ENCODE measurements at regions of chr11 and their contacts with region 1.

Region 1: GRCh38 chr11:67373925-67374618 is 674 bp upstream of the CLCF1 start:
- DNase-seq: peak; percentile 82
- H3K4me3 ChIP-seq: peak overlapping the region; percentile 28 to 86 (median 64)
- H3K27ac ChIP-seq: peak overlapping the region; percentile 33
- H3K4me1 ChIP-seq: peaks cover 37% of the 10 kb centered on the region
- H3K27me3 ChIP-seq: peaks cover 0 to 3% of the 10 kb centered on the region in 2 experiments
- CTCF ChIP-seq: peak; percentile 60 to 79
- POLR2A ChIP-seq: peak; percentile 58

Region 2: GRCh38 chr11:67167086-67167485 is 207.0 kb before region 1 on chr11:
- CTCF ChIA-PET with region 1: no interaction called
- POLR2A ChIA-PET with region 1: interaction called, 12 read pairs
- dilution Hi-C with region 1: no loop called
- intact Hi-C with region 1: no loop called
- DNase-seq: peak; percentile 8
- H3K4me3 ChIP-seq: no peak overlapping the region
- H3K27ac ChIP-seq: no peak overlapping the region
- H3K4me1 ChIP-seq: peaks cover 12% of the 10 kb centered on the region
- H3K27me3 ChIP-seq: no peaks in the 10 kb centered on the region
- CTCF ChIP-seq: no peak
- POLR2A ChIP-seq: no peak

Region 3: GRCh38 chr11:67288452-67289225 is 85.4 kb before region 1 on chr11:
- CTCF ChIA-PET with region 1: no interaction called
- POLR2A ChIA-PET with region 1: no interaction called
- dilution Hi-C with region 1: no loop called
- intact Hi-C with region 1: loop called (anchors 1 kb)
- DNase-seq: peak; percentile 86
- H3K4me3 ChIP-seq: peak overlapping the region; percentile 52 to 65 (median 54)
- H3K27ac ChIP-seq: peak overlapping the region; percentile 61
- H3K4me1 ChIP-seq: peaks cover 22% of the 10 kb centered on the region
- H3K27me3 ChIP-seq: no peaks in the 10 kb centered on the region
- CTCF ChIP-seq: peak; percentile 44 to 53
- POLR2A ChIP-seq: no peak

Region 4: GRCh38 chr11:67345920-67346799 is 27.9 kb before region 1 on chr11:
- CTCF ChIA-PET with region 1: interaction called, 1,051 read pairs
- POLR2A ChIA-PET with region 1: no interaction called
- dilution Hi-C with region 1: no loop called
- intact Hi-C with region 1: no loop called
- DNase-seq: peak; percentile 49
- H3K4me3 ChIP-seq: no peak overlapping the region
- H3K27ac ChIP-seq: no peak overlapping the region
- H3K4me1 ChIP-seq: peaks cover 7% of the 10 kb centered on the region
- H3K27me3 ChIP-seq: no peaks in the 10 kb centered on the region
- CTCF ChIP-seq: peak; percentile 70 to 81
- POLR2A ChIP-seq: no peak

Region 5: GRCh38 chr11:67353317-67354074 is 20.6 kb before region 1 on chr11 and contains the start of gene POLD4:
- CTCF ChIA-PET with region 1: interaction called, 1,051 read pairs
- POLR2A ChIA-PET with region 1: interaction called, 13 read pairs
- dilution Hi-C with region 1: no loop called
- intact Hi-C with region 1: loop called (anchors 1 kb)
- DNase-seq: peak; percentile 97
- H3K4me3 ChIP-seq: peak within 1 kb of the TSS; percentile 19 to 76 (median 53)
- H3K27ac ChIP-seq: peak within 1 kb of the TSS; percentile 78
- H3K4me1 ChIP-seq: peaks cover 47% of the 10 kb centered on the region
- H3K27me3 ChIP-seq: no peaks in the 10 kb centered on the region
- CTCF ChIP-seq: no peak
- POLR2A ChIP-seq: peak; percentile 95
- total RNA-seq, gene POLD4: 50.1 and 66.9 TPM in 2 replicates

Region 6: DNA sequence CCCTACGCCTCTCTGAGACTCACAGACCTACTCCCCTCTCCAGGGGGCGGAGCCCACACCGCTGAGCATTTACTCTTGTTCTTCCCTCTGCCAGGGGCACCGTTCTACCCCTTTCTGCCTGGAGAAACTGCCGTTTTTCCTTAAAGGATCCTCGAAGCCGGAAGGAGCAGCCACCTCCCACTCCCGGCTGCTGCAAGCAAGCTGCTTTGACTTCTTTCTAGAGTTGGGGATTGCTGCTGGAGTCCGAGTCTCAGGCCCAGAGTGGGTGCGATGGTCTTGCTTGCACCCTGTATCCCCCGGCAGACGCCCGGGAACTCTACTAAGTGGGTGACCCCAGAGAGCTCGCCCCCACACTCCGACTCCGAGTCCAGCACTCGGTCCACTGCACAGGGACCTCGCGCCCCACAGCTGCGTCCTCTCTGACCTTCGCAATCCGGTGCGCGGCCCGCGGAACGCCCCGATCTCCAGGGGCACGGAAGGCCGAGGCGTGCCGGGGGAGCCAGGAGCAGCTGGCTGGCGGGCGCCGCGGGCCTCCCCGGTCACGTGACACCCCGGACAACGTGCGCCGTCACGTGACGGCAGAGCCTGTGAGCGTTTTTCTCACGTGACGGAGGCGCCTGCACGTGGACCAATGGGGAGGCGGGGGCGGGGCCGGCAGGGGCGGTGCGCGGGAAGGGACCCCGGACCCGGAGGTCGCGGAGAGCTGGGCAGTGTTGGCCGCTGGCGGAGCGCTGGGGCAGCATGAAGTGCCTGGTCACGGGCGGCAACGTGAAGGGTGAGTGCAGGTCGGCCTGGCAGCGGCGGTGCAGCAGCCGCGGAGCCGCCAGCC is 17.4 kb after region 1 on chr11 and contains the start of gene RAD9A:
- CTCF ChIA-PET with region 1: interaction called, 10 read pairs
- POLR2A ChIA-PET with region 1: no interaction called
- dilution Hi-C with region 1: no loop called
- intact Hi-C with region 1: no loop called
- DNase-seq: peak; percentile 90
- H3K4me3 ChIP-seq: peak within 1 kb of the TSS; percentile 68 to 80 (median 76)
- H3K27ac ChIP-seq: peak within 1 kb of the TSS; percentile 56
- H3K4me1 ChIP-seq: peaks cover 10% of the 10 kb centered on the region
- H3K27me3 ChIP-seq: no peaks in the 10 kb centered on the region
- CTCF ChIP-seq: no peak
- POLR2A ChIP-seq: peak; percentile 82
- total RNA-seq, gene RAD9A: 18.4 and 24.6 TPM in 2 replicates